Natural killer cell (primary cell): ENCODE measurements at regions of chr3 and their contacts with region 1.

Region 1: DNA sequence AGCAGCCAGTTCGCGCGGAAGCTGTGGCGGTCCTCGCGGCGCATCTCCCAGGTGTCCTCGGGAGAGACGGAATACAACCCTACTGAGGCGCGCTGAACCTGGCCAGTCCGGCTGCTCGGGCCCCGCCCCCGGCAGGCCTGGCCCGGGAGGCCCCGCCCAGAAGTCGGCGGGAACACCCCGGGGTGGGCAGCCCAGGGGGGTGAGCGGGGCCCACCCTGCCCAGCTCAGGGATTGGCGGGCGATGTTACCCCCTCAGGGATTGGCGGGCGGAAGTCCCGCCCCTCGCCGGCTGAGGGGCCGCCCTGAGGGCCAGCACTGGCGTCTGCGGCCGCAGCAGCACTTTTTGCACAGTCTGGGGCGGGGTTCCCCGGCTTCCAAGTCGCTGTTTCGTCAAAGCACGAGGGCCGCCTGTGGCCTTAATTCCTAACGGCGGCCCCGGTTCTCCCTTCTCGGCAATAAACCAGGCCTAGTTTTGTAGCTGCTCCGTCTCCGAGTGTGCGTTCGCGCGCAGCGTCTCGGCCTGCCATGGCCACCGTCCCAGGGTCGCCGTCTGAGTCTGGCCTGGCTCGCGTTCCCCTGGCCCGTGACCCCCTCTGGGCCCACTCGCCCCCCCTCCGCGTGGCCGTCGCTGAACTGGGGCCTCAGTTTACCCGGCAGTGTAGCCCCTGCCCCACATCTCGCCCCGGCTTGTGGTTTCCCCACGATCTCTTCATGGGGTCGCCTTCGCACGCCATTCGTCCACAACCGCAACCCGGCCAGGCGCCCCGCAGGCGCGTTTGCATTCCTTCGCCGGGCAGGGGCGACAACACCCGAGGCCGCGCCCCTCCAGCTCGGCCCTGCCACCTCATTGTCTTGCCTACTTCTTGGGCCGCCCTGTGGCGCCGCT is 30.0 kb downstream of the NBEAL2 start:
- DNase-seq: peak; percentile 84 to 86
- ATAC-seq: peak; percentile 92 to 93 (median 93)
- H3K4me3 ChIP-seq: peak overlapping the region; percentile 25
- H3K4me3 Mint-ChIP-seq: peak overlapping the region; percentile 83
- H3K27ac ChIP-seq: peak overlapping the region; percentile 76
- H3K27ac Mint-ChIP-seq: peak overlapping the region; percentile 87 to 93
- H3K4me1 ChIP-seq: peaks cover 18% of the 10 kb centered on the region
- H3K4me1 Mint-ChIP-seq: peaks cover 11 to 23% of the 10 kb centered on the region in 2 donors
- H3K27me3 ChIP-seq: no peaks in the 10 kb centered on the region
- H3K27me3 Mint-ChIP-seq: no peaks in the 10 kb centered on the region
- CTCF ChIP-seq: peak; percentile 10

Region 2: GRCh38 chr3:46987743-46988401 is 21.6 kb before region 1 on chr3:
- intact Hi-C with region 1: loop called (anchors 2 kb)
- DNase-seq: peak; percentile 78 to 95
- ATAC-seq: peak; percentile 93 to 98 (median 96)
- H3K4me3 ChIP-seq: peak overlapping the region; percentile 21
- H3K4me3 Mint-ChIP-seq: peak overlapping the region; percentile 81
- H3K27ac ChIP-seq: peak overlapping the region; percentile 74
- H3K27ac Mint-ChIP-seq: peak overlapping the region; percentile 84 to 88
- H3K4me1 ChIP-seq: peaks cover 85% of the 10 kb centered on the region
- H3K4me1 Mint-ChIP-seq: peaks cover 42 to 86% of the 10 kb centered on the region in 2 donors
- H3K27me3 ChIP-seq: no peaks in the 10 kb centered on the region
- H3K27me3 Mint-ChIP-seq: no peaks in the 10 kb centered on the region
- CTCF ChIP-seq: no peak

Region 3: GRCh38 chr3:47042231-47042791 is 32.8 kb after region 1 on chr3:
- intact Hi-C with region 1: no loop called
- DNase-seq: no peak
- ATAC-seq: no peak
- H3K4me3 ChIP-seq: no peak overlapping the region
- H3K4me3 Mint-ChIP-seq: no peak overlapping the region
- H3K27ac ChIP-seq: no peak overlapping the region
- H3K27ac Mint-ChIP-seq: no peak overlapping the region
- H3K4me1 ChIP-seq: peaks cover 11% of the 10 kb centered on the region
- H3K4me1 Mint-ChIP-seq: peaks cover 15 to 17% of the 10 kb centered on the region in 2 donors
- H3K27me3 ChIP-seq: no peaks in the 10 kb centered on the region
- H3K27me3 Mint-ChIP-seq: no peaks in the 10 kb centered on the region
- CTCF ChIP-seq: no peak